PC-9 (cell line): ENCODE measurements at regions of chr3 and their contacts with region 1.

Region 1: DNA sequence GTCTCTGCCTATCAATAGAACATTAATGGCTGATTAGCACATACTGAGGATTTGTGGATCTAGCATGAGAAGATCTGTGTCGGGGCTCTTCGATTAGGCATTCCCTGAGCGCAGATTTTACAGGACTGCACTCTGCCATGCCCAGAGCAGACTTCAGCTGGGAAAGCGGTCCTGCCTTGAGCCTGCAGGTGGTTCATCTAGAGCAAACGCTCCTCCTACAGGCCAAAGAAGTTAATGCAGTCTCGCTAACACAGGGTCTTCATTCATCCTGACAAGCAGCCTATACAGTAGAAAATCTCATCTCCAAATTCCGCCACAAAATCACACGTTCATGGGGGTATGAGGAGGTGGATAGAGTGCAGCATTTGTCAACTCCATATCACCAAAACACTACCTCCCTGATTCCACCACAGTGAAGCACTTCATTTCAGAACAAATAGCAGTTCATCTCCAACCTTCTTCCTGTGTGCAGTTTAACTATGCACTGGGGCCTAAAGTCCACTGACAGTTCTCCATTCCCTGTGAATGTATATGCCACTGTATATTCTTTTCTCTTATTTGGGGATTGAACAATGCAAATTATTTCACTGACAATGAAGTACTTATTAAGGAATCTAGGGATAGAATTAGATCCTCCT is 405.8 kb downstream of the IGSF11 start:
- DNase-seq: peak in 1 of 2 experiments; percentile 65
- H3K4me3 ChIP-seq: no peak overlapping the region
- H3K27ac ChIP-seq: no peak overlapping the region
- H3K4me1 ChIP-seq: no peaks in the 10 kb centered on the region
- H3K27me3 ChIP-seq: no peaks in the 10 kb centered on the region
- CTCF ChIP-seq: peak; percentile 85

Region 2: GRCh38 chr3:117997201-117998049 is 631.4 kb before region 1 on chr3:
- CTCF ChIA-PET with region 1: no interaction called
- POLR2A ChIA-PET with region 1: no interaction called
- intact Hi-C with region 1: loop called (anchors 10 kb)
- DNase-seq: peak in 1 of 2 experiments; percentile 47
- H3K4me3 ChIP-seq: no peak overlapping the region
- H3K27ac ChIP-seq: no peak overlapping the region
- H3K4me1 ChIP-seq: no peaks in the 10 kb centered on the region
- H3K27me3 ChIP-seq: no peaks in the 10 kb centered on the region
- CTCF ChIP-seq: peak; percentile 62; the same call in 1 of the 2 replicates

Region 3: GRCh38 chr3:118348169-118348557 is 280.7 kb before region 1 on chr3:
- CTCF ChIA-PET with region 1: no interaction called
- POLR2A ChIA-PET with region 1: no interaction called
- intact Hi-C with region 1: loop called (anchors 10 kb)
- DNase-seq: no peak
- H3K4me3 ChIP-seq: no peak overlapping the region
- H3K27ac ChIP-seq: no peak overlapping the region
- H3K4me1 ChIP-seq: no peaks in the 10 kb centered on the region
- H3K27me3 ChIP-seq: no peaks in the 10 kb centered on the region
- CTCF ChIP-seq: no peak

Region 4: DNA sequence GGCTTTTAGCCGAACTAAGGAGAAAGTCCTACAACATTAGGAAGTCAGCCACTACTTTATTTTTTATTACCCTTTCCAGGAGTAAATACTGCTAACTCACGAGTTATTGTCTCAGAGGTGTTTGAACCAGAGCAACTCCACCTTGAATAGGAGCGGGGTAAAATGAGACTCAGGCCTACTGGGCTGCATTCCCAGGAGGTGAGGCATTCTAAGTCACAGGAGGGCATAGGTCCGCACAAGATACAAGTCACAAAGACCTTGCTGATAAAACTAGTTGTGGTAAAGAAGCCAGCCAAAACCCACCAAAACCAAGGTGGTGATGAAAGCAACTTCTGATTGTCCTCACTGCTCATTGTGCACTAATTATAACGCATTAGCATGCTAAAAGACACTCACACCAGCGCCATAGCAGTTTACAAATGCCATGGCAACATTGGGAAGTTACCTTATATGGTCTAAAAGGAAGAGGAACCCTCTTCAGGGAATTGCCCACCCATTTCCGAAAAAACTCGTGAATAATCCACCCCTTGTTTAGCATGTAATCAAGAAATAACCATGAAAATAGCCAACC is 150.0 kb before region 1 on chr3:
- CTCF ChIA-PET with region 1: no interaction called
- POLR2A ChIA-PET with region 1: no interaction called
- intact Hi-C with region 1: loop called (anchors 1 kb)
- DNase-seq: peak; percentile 71 to 75
- H3K4me3 ChIP-seq: peak overlapping the region; percentile 13; the same call in 1 of the 2 replicates
- H3K27ac ChIP-seq: peak overlapping the region; percentile 73
- H3K4me1 ChIP-seq: peaks cover 15% of the 10 kb centered on the region
- H3K27me3 ChIP-seq: no peaks in the 10 kb centered on the region
- CTCF ChIP-seq: no peak

Region 5: DNA sequence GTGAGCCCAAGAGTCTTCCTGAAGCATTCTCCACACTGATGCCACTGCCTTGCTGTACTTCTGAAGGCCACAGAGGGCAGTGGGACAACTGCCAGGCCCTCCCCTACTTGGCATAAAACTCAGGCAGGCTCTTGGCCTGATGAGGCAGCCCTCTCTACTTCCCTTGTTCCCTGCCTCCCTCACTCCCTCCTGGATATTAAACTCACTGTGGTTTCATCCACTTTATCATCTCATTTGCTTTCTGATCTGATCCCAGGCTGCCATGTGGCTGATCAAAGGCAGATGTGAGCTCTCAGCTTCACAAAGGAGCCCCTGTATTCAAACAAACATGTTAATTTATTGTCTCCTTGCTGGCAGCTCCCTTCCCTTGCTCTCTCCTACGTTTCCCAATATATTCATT is 127.7 kb before region 1 on chr3:
- CTCF ChIA-PET with region 1: no interaction called
- POLR2A ChIA-PET with region 1: no interaction called
- intact Hi-C with region 1: loop called (anchors 10 kb)
- DNase-seq: peak in 1 of 2 experiments; percentile 57
- H3K4me3 ChIP-seq: no peak overlapping the region
- H3K27ac ChIP-seq: no peak overlapping the region
- H3K4me1 ChIP-seq: no peaks in the 10 kb centered on the region
- H3K27me3 ChIP-seq: no peaks in the 10 kb centered on the region
- CTCF ChIP-seq: no peak

Region 6: DNA sequence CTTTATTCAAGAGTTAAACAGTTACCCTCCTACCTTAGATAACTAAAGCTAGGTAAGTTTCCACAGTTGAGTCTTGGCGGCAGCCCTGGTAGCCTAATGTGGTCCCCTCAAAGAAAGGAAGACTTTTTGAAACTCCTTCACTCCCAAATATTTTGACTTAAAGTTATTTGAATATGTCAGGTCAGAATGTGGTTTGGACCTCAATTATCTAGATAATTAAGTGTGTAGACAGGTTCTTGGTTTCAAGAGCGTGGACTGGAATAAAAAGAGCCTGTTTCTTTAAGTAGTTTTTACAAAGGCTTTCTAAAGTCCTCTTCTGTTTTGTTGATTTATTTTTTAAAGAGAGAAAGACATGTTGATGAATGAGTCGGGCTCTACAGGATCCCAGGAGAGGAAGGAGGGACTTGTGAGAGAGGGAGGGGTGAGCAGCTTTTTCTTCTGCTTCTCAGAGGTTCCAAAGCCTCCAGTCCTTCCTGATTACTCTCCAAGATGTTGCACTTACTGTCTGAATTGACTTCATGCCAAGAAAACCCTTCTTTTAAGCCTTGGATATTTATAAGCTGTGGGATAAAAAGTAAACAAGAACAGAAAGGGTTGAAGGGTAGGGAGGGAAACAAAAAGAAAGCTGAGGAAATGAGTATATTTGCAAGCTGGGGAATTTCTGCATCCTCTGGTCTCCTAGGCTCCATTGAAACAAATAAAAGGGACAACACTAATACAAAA is 51.6 kb before region 1 on chr3:
- CTCF ChIA-PET with region 1: no interaction called
- POLR2A ChIA-PET with region 1: no interaction called
- intact Hi-C with region 1: no loop called
- DNase-seq: no peak
- H3K4me3 ChIP-seq: no peak overlapping the region
- H3K27ac ChIP-seq: no peak overlapping the region
- H3K4me1 ChIP-seq: no peaks in the 10 kb centered on the region
- H3K27me3 ChIP-seq: no peaks in the 10 kb centered on the region
- CTCF ChIP-seq: no peak